ENCODE measurements at regions of chr13 and their contacts with region 1.

Region 1: DNA sequence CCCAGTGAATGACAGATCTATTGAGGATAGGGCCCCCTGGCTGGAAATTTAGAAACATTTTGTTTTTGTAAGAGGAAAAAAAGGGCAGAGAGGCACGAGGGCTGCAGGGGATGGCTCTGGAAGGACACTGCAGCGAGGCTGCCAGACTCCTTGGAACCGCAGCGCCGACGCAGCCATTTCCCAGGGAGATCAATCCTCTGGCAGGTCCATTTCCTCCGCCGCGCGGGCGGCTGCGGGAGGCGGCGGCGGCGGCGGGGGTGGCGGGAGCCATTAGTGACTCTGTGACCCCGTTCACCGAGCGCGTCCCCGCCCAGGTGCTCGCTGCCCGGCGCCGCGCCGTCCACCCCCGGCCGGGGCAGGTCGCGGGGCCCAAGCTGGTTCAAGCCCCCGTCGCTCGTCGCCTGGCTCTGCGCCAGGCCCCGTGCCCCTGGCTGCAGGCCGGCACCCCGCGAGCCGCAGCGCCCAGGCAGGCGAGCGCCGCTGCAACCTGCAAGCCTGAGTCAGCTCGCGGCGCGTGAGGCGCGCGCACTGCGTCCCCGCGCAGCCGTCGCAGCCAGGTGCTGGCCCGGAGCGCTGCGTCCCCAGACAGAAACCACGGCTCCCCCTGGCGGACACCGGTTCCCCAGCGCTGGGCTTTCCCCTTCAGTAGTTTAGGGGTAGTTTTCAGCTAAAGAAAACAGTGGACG is 192.6 kb downstream of the KATNAL1 start:
- DNase-seq: peak; percentile 86 to 93 (median 87)
- H3K4me3 ChIP-seq: peak overlapping the region; percentile 47
- H3K4me3 Mint-ChIP-seq: peak overlapping the region; percentile 76 to 94 (median 86)
- H3K27ac ChIP-seq: no peak overlapping the region
- H3K27ac Mint-ChIP-seq: peak overlapping the region; percentile 2 to 93 (median 77)
- H3K4me1 ChIP-seq: peaks cover 21% of the 10 kb centered on the region
- H3K4me1 Mint-ChIP-seq: peaks cover 23 to 39% (median 34%) of the 10 kb centered on the region in 3 donors
- H3K27me3 ChIP-seq: no peaks in the 10 kb centered on the region
- H3K27me3 Mint-ChIP-seq: peaks cover 0 to 2% of the 10 kb centered on the region in 2 donors

Region 2: GRCh38 chr13:29508130-29508875 is 606.4 kb before region 1 on chr13:
- CTCF ChIA-PET with region 1: interaction called, 30 read pairs
- POLR2A ChIA-PET with region 1: no interaction called
- DNase-seq: peak; percentile 51 to 81 (median 61)
- H3K4me3 ChIP-seq: no peak overlapping the region
- H3K4me3 Mint-ChIP-seq: no peak overlapping the region
- H3K27ac ChIP-seq: no peak overlapping the region
- H3K27ac Mint-ChIP-seq: peak overlapping the region in 1 of 8 donors; percentile 19
- H3K4me1 ChIP-seq: no peaks in the 10 kb centered on the region
- H3K4me1 Mint-ChIP-seq: no peaks in the 10 kb centered on the region
- H3K27me3 ChIP-seq: no peaks in the 10 kb centered on the region
- H3K27me3 Mint-ChIP-seq: peaks cover 6 to 21% of the 10 kb centered on the region in 2 donors

Region 3: GRCh38 chr13:29791997-29792780 is 322.5 kb before region 1 on chr13:
- CTCF ChIA-PET with region 1: interaction called, 10 read pairs
- POLR2A ChIA-PET with region 1: no interaction called
- DNase-seq: no peak
- H3K4me3 ChIP-seq: no peak overlapping the region
- H3K4me3 Mint-ChIP-seq: no peak overlapping the region
- H3K27ac ChIP-seq: no peak overlapping the region
- H3K27ac Mint-ChIP-seq: no peak overlapping the region
- H3K4me1 ChIP-seq: no peaks in the 10 kb centered on the region
- H3K4me1 Mint-ChIP-seq: peaks cover 48 to 81% (median 80%) of the 10 kb centered on the region in 3 donors
- H3K27me3 ChIP-seq: no peaks in the 10 kb centered on the region
- H3K27me3 Mint-ChIP-seq: no peaks in the 10 kb centered on the region

Region 4: DNA sequence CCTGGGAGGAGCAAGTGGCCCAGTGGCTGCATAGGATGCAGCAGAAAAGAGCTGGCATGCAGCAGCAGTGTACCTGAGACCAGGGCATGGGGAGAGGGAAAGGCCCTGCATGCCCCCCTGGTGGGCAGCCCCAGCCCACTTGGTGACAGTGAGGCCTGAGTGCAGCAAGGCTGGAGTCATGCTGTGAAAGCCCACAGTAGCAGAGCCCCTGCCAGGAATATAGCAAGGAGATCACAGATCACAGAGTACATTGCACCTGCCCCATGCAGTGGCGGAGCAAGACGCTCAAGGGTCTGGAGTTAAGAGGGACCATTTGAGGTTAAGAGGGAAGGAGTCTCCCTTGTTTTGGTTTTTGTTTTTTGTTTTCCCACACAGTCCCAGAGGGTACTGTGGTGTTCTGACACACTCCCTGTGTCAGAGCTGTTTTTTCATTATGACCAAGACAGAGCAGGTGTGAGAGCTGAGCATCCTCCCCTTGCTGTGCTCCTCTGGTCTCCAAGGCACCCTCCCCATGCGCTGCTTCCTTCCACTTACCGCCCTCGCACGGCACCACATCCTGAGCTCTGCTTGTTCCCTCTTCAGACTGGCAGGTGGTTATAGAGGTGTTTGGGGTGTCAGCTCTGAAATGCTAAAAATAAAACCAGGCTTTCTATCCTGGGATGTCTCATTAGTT is 179.3 kb before region 1 on chr13:
- CTCF ChIA-PET with region 1: interaction called, 136 read pairs
- POLR2A ChIA-PET with region 1: interaction called, 9 read pairs
- DNase-seq: peak; percentile 46 to 89 (median 75)
- H3K4me3 ChIP-seq: peak overlapping the region; percentile 66
- H3K4me3 Mint-ChIP-seq: peak overlapping the region; percentile 69 to 94 (median 87)
- H3K27ac ChIP-seq: no peak overlapping the region
- H3K27ac Mint-ChIP-seq: peak overlapping the region; percentile 51 to 94 (median 86)
- H3K4me1 ChIP-seq: peaks cover 46% of the 10 kb centered on the region
- H3K4me1 Mint-ChIP-seq: peaks cover 45 to 65% (median 65%) of the 10 kb centered on the region in 3 donors
- H3K27me3 ChIP-seq: no peaks in the 10 kb centered on the region
- H3K27me3 Mint-ChIP-seq: no peaks in the 10 kb centered on the region

Region 5: GRCh38 chr13:30125422-30126073 is 10.8 kb after region 1 on chr13:
- CTCF ChIA-PET with region 1: interaction called, 62 read pairs
- POLR2A ChIA-PET with region 1: no interaction called
- DNase-seq: no peak
- H3K4me3 ChIP-seq: no peak overlapping the region
- H3K4me3 Mint-ChIP-seq: no peak overlapping the region
- H3K27ac ChIP-seq: no peak overlapping the region
- H3K27ac Mint-ChIP-seq: peak overlapping the region in 1 of 8 donors; percentile 18
- H3K4me1 ChIP-seq: peaks cover 12% of the 10 kb centered on the region
- H3K4me1 Mint-ChIP-seq: peaks cover 21 to 39% (median 34%) of the 10 kb centered on the region in 3 donors
- H3K27me3 ChIP-seq: no peaks in the 10 kb centered on the region
- H3K27me3 Mint-ChIP-seq: no peaks in the 10 kb centered on the region

Region 6: DNA sequence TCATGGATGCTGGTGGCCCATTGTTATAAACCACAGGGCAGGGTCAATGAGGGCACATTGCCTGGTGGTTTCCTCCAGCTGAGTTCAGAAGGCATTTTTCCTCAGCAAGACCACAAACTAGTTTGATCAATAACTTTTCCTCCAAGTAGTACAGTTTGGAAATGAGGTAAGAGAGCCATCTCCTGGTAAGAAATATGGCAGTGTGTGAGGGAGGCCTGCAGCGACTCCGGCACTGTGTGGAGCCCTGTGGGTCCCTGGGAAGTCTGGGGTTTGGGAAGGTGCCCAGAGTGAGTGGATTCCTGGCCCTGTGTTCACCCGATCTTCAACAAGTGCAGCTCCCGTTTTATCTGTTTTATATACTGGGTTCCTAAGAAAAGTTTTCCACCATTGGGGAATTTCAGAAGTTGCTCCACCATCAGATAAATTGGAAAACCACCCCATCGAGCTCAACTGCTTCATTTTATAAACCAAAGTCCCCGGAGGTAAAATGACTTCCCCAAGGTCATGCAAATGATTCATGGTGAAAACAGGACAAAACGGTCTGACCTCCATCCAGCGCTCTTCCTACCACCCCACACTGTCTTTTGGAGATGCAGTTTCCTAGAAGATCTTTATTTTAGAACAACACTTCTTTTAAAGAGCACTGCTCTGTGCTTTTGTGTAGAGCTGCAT is 44.2 kb after region 1 on chr13:
- CTCF ChIA-PET with region 1: interaction called, 38 read pairs
- POLR2A ChIA-PET with region 1: no interaction called
- DNase-seq: peak in 2 of 5 donors; percentile 48 to 57
- H3K4me3 ChIP-seq: no peak overlapping the region
- H3K4me3 Mint-ChIP-seq: peak overlapping the region in 6 of 7 donors; percentile 15 to 72 (median 58)
- H3K27ac ChIP-seq: no peak overlapping the region
- H3K27ac Mint-ChIP-seq: peak overlapping the region; percentile 43 to 92 (median 80)
- H3K4me1 ChIP-seq: peaks cover 24% of the 10 kb centered on the region
- H3K4me1 Mint-ChIP-seq: peaks cover 51 to 58% (median 57%) of the 10 kb centered on the region in 3 donors
- H3K27me3 ChIP-seq: no peaks in the 10 kb centered on the region
- H3K27me3 Mint-ChIP-seq: no peaks in the 10 kb centered on the region

Region 7: GRCh38 chr13:30241532-30241931 is 126.8 kb after region 1 on chr13:
- CTCF ChIA-PET with region 1: no interaction called
- POLR2A ChIA-PET with region 1: no interaction called
- DNase-seq: no peak
- H3K4me3 ChIP-seq: no peak overlapping the region
- H3K4me3 Mint-ChIP-seq: no peak overlapping the region
- H3K27ac ChIP-seq: no peak overlapping the region
- H3K27ac Mint-ChIP-seq: peak overlapping the region in 2 of 8 donors; percentile 4 to 17
- H3K4me1 ChIP-seq: no peaks in the 10 kb centered on the region
- H3K4me1 Mint-ChIP-seq: peaks cover 0 to 6% (median 0%) of the 10 kb centered on the region in 3 donors
- H3K27me3 ChIP-seq: no peaks in the 10 kb centered on the region
- H3K27me3 Mint-ChIP-seq: no peaks in the 10 kb centered on the region

Measured in CD8-positive, alpha-beta memory T cell (primary cell).